Activated CD4-positive, alpha-beta T cell treated with anti-CD3 and anti-CD28 coated beads for 36 hours (primary cell): ENCODE measurements at regions of chr1 and their contacts with region 1.

Region 1: GRCh38 chr1:230066466-230067404 is at the start of gene GALNT2:
- DNase-seq: peak; percentile 95
- ATAC-seq: peak; percentile 90
- H3K4me3 Mint-ChIP-seq: peak within 1 kb of the TSS; percentile 83
- H3K27ac Mint-ChIP-seq: peak within 1 kb of the TSS; percentile 89
- H3K4me1 Mint-ChIP-seq: peaks cover 37% of the 10 kb centered on the region
- H3K27me3 Mint-ChIP-seq: no peaks in the 10 kb centered on the region
- total RNA-seq, gene GALNT2: 48.2 to 51.0 TPM

Region 2: DNA sequence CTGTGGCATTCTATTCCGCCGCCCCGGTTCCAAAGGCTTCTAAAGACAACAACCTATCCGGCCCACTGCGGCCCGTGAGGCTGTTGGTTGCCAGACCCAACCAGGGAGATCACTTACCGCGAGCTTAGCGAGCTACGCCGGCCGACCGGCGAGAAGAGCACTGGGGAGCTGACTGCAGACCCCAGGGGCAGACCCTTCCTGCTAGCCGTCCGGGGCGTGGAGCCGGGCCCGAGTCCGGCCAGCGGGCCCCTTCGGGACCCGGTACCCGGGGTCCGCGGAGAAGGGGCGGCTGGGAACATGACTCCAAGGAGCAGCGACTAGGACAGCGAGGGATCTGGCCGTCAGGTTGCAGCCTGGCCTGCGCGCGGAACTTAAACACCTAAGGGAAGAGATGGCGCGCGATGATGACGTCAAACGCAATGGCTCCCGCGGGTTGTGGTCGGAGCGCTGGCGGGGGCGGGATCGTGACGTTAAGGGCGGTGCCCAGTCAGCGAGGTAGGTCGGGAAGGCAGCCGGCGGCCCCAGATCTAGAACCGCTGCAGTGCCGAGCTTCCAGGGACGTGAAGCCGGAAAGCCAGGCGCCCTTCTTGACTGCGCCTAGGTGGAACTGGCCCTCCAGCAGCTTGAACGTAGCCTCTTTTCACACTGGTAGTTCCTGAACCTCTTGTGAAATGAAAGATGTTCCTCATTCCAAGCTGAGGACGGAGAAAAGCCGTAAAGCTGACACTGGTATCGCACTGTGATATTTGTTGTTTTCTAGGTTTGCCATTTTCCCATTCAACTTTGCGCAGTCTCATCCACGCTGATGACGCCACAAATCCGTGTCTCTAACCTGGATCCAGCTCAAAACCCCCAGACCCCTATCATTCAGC is 558.5 kb before region 1 on chr1 and contains the start of gene NUP133:
- CTCF ChIA-PET with region 1: no interaction called
- POLR2A ChIA-PET with region 1: no interaction called
- intact Hi-C with region 1: loop called in 1 of 2 experiments (anchors 1 kb)
- DNase-seq: peak; percentile 100
- ATAC-seq: peak; percentile 95
- H3K4me3 Mint-ChIP-seq: peak within 1 kb of the TSS; percentile 95
- H3K27ac Mint-ChIP-seq: peak within 1 kb of the TSS; percentile 92
- H3K4me1 Mint-ChIP-seq: peaks cover 24% of the 10 kb centered on the region
- H3K27me3 Mint-ChIP-seq: no peaks in the 10 kb centered on the region
- total RNA-seq, gene NUP133: 53.5 to 57.5 TPM

Region 3: GRCh38 chr1:229661022-229661877 is 405.5 kb before region 1 on chr1:
- CTCF ChIA-PET with region 1: interaction called, 3 read pairs
- POLR2A ChIA-PET with region 1: no interaction called
- intact Hi-C with region 1: loop called (anchors 5 kb)
- DNase-seq: peak; percentile 88
- ATAC-seq: peak; percentile 64
- H3K4me3 Mint-ChIP-seq: no peak overlapping the region
- H3K27ac Mint-ChIP-seq: no peak overlapping the region
- H3K4me1 Mint-ChIP-seq: peaks cover 25% of the 10 kb centered on the region
- H3K27me3 Mint-ChIP-seq: no peaks in the 10 kb centered on the region

Region 4: GRCh38 chr1:230049731-230050130 is 17.0 kb before region 1 on chr1:
- CTCF ChIA-PET with region 1: no interaction called
- POLR2A ChIA-PET with region 1: no interaction called
- intact Hi-C with region 1: no loop called
- DNase-seq: no peak
- ATAC-seq: no peak
- H3K4me3 Mint-ChIP-seq: no peak overlapping the region
- H3K27ac Mint-ChIP-seq: no peak overlapping the region
- H3K4me1 Mint-ChIP-seq: peaks cover 4% of the 10 kb centered on the region
- H3K27me3 Mint-ChIP-seq: peaks cover 8% of the 10 kb centered on the region

Region 5: GRCh38 chr1:230104395-230105244 is 37.9 kb after region 1 on chr1:
- CTCF ChIA-PET with region 1: interaction called, 5 read pairs
- POLR2A ChIA-PET with region 1: interaction called, 7 read pairs
- intact Hi-C with region 1: loop called (anchors 1 kb)
- DNase-seq: peak; percentile 95
- ATAC-seq: peak; percentile 78
- H3K4me3 Mint-ChIP-seq: peak overlapping the region; percentile 44
- H3K27ac Mint-ChIP-seq: peak overlapping the region; percentile 92
- H3K4me1 Mint-ChIP-seq: peaks cover 86% of the 10 kb centered on the region
- H3K27me3 Mint-ChIP-seq: no peaks in the 10 kb centered on the region

Region 6: DNA sequence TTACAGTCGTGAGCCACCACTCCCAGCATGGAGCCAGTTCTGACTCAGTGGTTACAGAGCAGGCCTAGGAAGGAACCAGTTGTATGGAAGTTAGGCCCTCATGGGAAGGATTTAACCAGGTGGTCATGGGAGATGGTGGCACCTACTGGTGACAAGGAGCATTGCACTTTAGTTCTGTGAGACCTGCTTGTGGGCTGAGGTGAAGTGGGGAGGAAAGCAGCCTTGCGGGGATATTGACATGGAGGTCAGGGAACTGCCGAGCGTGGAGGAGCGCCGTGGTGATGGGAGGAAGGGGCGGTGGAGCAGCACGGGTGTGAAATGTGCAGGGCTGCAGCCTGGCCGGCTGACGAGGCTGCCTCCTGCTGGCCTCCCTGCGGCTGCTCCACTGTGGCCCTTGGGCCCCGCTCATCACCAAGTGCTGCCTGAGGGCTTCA is 100.7 kb after region 1 on chr1:
- CTCF ChIA-PET with region 1: interaction called, 3 read pairs
- POLR2A ChIA-PET with region 1: no interaction called
- intact Hi-C with region 1: loop called in 1 of 2 experiments (anchors 2 kb)
- DNase-seq: peak; percentile 59
- ATAC-seq: peak; percentile 66
- H3K4me3 Mint-ChIP-seq: no peak overlapping the region
- H3K27ac Mint-ChIP-seq: peak overlapping the region; percentile 40
- H3K4me1 Mint-ChIP-seq: peaks cover 43% of the 10 kb centered on the region
- H3K27me3 Mint-ChIP-seq: no peaks in the 10 kb centered on the region

Region 7: GRCh38 chr1:230401763-230402294 is 335.1 kb after region 1 on chr1:
- CTCF ChIA-PET with region 1: no interaction called
- POLR2A ChIA-PET with region 1: no interaction called
- intact Hi-C with region 1: no loop called
- DNase-seq: no peak
- ATAC-seq: no peak
- H3K4me3 Mint-ChIP-seq: no peak overlapping the region
- H3K27ac Mint-ChIP-seq: no peak overlapping the region
- H3K4me1 Mint-ChIP-seq: no peaks in the 10 kb centered on the region
- H3K27me3 Mint-ChIP-seq: peaks cover 11% of the 10 kb centered on the region

Region 8: GRCh38 chr1:230978491-230979388 is 912.0 kb after region 1 on chr1 and contains the starts of genes ARV1 and TTC13:
- CTCF ChIA-PET with region 1: no interaction called
- POLR2A ChIA-PET with region 1: no interaction called
- intact Hi-C with region 1: loop called in 1 of 2 experiments (anchors 2 kb)
- DNase-seq: peak; percentile 99
- ATAC-seq: peak; percentile 97
- H3K4me3 Mint-ChIP-seq: peak within 1 kb of the TSS; percentile 86
- H3K27ac Mint-ChIP-seq: peak within 1 kb of the TSS; percentile 98
- H3K4me1 Mint-ChIP-seq: peaks cover 32% of the 10 kb centered on the region
- H3K27me3 Mint-ChIP-seq: no peaks in the 10 kb centered on the region
- total RNA-seq, gene ARV1: 16.2 to 16.9 TPM
- total RNA-seq, gene TTC13: 13.6 to 16.2 TPM